Activated B cell treated with CpG ODN at 0.5 μM for 24 hours (primary cell): ENCODE measurements at regions of chr15 and their contacts with region 1.

Region 1: GRCh38 chr15:72070817-72071447 is 47.0 kb downstream of the MYO9A start:
- DNase-seq: no peak
- ATAC-seq: peak; percentile 37
- H3K4me3 Mint-ChIP-seq: peak overlapping the region; percentile 32
- H3K27ac Mint-ChIP-seq: peak overlapping the region; percentile 24
- H3K4me1 Mint-ChIP-seq: peaks cover 25% of the 10 kb centered on the region
- H3K27me3 Mint-ChIP-seq: no peaks in the 10 kb centered on the region
- CTCF ChIP-seq: no peak

Region 2: GRCh38 chr15:72037321-72037720 is 33.6 kb before region 1 on chr15:
- CTCF ChIA-PET with region 1: no interaction called
- POLR2A ChIA-PET with region 1: no interaction called
- intact Hi-C with region 1: no loop called
- DNase-seq: no peak
- ATAC-seq: no peak
- H3K4me3 Mint-ChIP-seq: no peak overlapping the region
- H3K27ac Mint-ChIP-seq: no peak overlapping the region
- H3K4me1 Mint-ChIP-seq: peaks cover 3% of the 10 kb centered on the region
- H3K27me3 Mint-ChIP-seq: no peaks in the 10 kb centered on the region
- CTCF ChIP-seq: no peak

Region 3: GRCh38 chr15:72124218-72124617 is 53.3 kb after region 1 on chr15:
- CTCF ChIA-PET with region 1: no interaction called
- POLR2A ChIA-PET with region 1: interaction called, 12 read pairs
- intact Hi-C with region 1: no loop called
- DNase-seq: no peak
- ATAC-seq: no peak
- H3K4me3 Mint-ChIP-seq: no peak overlapping the region
- H3K27ac Mint-ChIP-seq: no peak overlapping the region
- H3K4me1 Mint-ChIP-seq: peaks cover 3% of the 10 kb centered on the region
- H3K27me3 Mint-ChIP-seq: no peaks in the 10 kb centered on the region
- CTCF ChIP-seq: no peak